ENCODE measurements at regions of chr2 and their contacts with region 1.

Region 1: DNA sequence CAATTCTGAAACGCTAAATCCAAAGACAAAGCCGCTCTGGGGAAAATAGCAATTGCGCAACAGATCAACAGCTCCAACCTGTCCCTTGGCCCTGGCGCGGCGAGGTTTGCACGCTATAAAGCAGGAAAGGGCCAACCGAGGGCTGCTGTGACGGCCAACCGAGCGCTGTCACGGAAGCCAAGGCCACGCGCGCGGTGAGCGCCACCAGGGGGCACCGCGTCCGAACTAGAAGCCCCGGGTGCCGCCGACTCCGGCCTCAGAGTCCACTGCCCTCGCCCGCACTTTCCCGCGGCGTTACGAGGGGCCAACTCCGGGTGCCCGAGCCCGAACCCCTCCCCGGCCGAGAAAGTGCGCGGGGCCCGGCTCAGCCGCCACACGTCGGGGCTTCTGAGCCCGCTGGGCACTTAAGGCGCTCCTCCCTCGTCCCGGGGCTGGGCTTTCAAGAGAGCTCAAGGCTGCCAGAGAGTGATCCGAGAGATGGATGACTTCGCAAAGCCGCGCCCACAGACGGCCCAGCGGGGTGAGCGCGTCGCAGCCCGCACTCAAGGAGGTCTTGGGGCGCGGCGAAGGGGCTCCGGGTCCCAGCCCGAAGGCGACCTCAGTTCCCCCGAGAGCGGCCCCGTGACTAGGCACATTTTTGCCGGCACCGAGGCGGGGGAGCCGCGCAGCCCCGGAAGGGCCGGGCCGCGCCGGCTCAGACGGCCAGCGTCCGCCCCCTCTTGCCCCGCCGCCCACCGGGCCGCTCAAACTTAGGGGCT is 897 bp downstream of the NFE2L2 start:
- DNase-seq: peak; percentile 94
- H3K4me3 Mint-ChIP-seq: peak overlapping the region; percentile 90
- H3K27ac Mint-ChIP-seq: peak overlapping the region; percentile 93
- H3K4me1 Mint-ChIP-seq: peaks cover 51% of the 10 kb centered on the region
- H3K27me3 Mint-ChIP-seq: no peaks in the 10 kb centered on the region

Region 2: GRCh38 chr2:176931588-176932563 is 331.8 kb before region 1 on chr2:
- intact Hi-C with region 1: loop called (anchors 10 kb)
- DNase-seq: peak; percentile 31
- H3K4me3 Mint-ChIP-seq: no peak overlapping the region
- H3K27ac Mint-ChIP-seq: peak overlapping the region; percentile 93
- H3K4me1 Mint-ChIP-seq: peaks cover 28% of the 10 kb centered on the region
- H3K27me3 Mint-ChIP-seq: no peaks in the 10 kb centered on the region

Region 3: GRCh38 chr2:177212106-177212890 is 51.3 kb before region 1 on chr2 and contains the start of gene HNRNPA3:
- intact Hi-C with region 1: loop called (anchors 1 kb)
- DNase-seq: peak; percentile 100
- H3K4me3 Mint-ChIP-seq: peak within 1 kb of the TSS; percentile 96
- H3K27ac Mint-ChIP-seq: peak within 1 kb of the TSS; percentile 100
- H3K4me1 Mint-ChIP-seq: peaks cover 33% of the 10 kb centered on the region
- H3K27me3 Mint-ChIP-seq: no peaks in the 10 kb centered on the region
- total RNA-seq, gene HNRNPA3: 322 and 323 TPM in 2 replicates

Region 4: GRCh38 chr2:177229448-177230242 is 34.0 kb before region 1 on chr2:
- intact Hi-C with region 1: loop called (anchors 5 kb)
- DNase-seq: no peak
- H3K4me3 Mint-ChIP-seq: no peak overlapping the region
- H3K27ac Mint-ChIP-seq: peak overlapping the region; percentile 65
- H3K4me1 Mint-ChIP-seq: peaks cover 43% of the 10 kb centered on the region
- H3K27me3 Mint-ChIP-seq: no peaks in the 10 kb centered on the region

Region 5: DNA sequence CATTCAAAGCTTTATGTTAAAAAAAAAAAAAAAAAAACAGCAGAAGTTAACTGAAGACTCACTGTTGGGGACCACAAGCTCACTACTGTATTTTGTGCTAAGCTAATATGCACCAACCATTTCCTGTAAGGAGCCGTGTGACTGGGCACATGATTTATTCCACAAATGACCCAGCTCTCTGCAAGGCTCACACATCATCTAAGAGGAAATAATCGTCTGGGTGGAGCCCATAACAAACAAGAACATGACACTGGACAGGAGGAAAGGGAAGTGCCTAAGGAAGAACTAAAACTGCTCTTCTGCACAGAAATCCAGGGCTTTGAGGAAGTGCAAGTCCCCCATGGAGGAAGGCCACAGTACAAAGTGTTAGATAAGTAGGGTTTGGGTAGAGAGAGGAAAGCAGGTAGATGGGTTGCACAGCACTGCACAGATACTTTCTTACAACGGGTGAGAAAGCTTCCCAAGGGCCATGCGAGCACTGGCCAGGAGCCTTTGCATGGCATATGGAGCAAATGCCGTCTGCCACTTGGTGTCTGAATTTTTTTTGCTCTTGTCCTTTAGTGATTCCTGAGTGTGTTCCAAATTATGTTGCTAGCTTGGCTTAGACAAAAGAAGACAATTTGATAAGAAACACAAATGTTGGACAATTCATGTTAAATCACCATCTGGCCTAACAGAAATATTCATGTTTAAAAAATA is 23.5 kb before region 1 on chr2:
- intact Hi-C with region 1: loop called (anchors 1 kb)
- DNase-seq: peak; percentile 18
- H3K4me3 Mint-ChIP-seq: peak overlapping the region; percentile 40
- H3K27ac Mint-ChIP-seq: peak overlapping the region; percentile 84
- H3K4me1 Mint-ChIP-seq: peaks cover 66% of the 10 kb centered on the region
- H3K27me3 Mint-ChIP-seq: no peaks in the 10 kb centered on the region

Region 6: DNA sequence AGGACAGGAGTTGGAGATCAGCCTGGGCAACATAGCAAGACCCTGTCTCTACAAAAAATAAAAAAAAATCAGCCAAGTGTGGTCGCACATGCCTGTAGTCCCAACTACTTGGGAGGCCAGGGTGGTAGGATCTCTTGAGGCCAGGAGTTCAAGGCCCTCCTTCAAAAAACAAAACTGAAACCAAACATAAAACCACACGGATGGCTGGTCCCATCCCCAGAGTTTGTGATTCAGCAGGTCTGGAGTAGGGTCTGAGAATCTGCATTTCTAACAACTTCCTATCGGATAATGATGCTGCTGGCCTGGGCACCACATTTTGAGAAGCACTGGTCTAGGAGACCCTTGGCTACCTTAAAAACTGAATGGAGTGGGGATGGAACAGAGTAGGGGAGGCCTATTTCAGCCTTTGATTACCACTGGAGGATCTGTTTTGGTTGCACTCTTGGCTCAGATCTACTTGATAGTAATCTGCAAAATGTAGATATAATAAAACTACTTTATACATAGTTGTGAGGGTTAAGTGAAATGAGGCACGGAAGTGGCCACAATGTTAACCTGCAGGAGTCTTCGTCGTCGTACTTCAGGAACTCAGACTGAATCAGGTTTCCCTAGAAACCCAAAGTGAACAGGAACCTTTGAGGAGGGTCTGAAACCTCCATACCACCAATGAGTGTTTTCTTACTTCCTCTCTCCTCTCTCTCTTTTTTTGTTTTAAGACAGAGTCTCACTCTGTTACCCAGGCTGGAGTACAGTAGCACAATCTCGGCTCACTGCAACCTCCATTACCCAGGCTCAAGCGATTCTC is 26.4 kb after region 1 on chr2:
- intact Hi-C with region 1: loop called (anchors 1 kb)
- DNase-seq: peak; percentile 37
- H3K4me3 Mint-ChIP-seq: peak overlapping the region; percentile 61
- H3K27ac Mint-ChIP-seq: peak overlapping the region; percentile 79
- H3K4me1 Mint-ChIP-seq: peaks cover 46% of the 10 kb centered on the region
- H3K27me3 Mint-ChIP-seq: no peaks in the 10 kb centered on the region

Region 7: GRCh38 chr2:177392373-177393202 is 129.0 kb after region 1 on chr2 and contains the start of gene AGPS:
- intact Hi-C with region 1: loop called (anchors 1 kb)
- DNase-seq: peak; percentile 79
- H3K4me3 Mint-ChIP-seq: peak within 1 kb of the TSS; percentile 96
- H3K27ac Mint-ChIP-seq: peak within 1 kb of the TSS; percentile 94
- H3K4me1 Mint-ChIP-seq: peaks cover 63% of the 10 kb centered on the region
- H3K27me3 Mint-ChIP-seq: no peaks in the 10 kb centered on the region
- total RNA-seq, gene AGPS: 70.4 and 74.4 TPM in 2 replicates

Measured in activated T-helper 2 cell treated with anti-CD3 and anti-CD28 coated beads, Interferon-gamma antibody, Interleukin-2, Interleukin-4, amounts not matched to agents 10 μg/mL and 5 μg/mL and 100 μg/mL, durations not matched to agents 14 hours and 24 hours and 36 hours (primary cell).